Aorta (tissue), 5 donors: ENCODE measurements at regions of chr3 and their contacts with region 1.

Region 1: DNA sequence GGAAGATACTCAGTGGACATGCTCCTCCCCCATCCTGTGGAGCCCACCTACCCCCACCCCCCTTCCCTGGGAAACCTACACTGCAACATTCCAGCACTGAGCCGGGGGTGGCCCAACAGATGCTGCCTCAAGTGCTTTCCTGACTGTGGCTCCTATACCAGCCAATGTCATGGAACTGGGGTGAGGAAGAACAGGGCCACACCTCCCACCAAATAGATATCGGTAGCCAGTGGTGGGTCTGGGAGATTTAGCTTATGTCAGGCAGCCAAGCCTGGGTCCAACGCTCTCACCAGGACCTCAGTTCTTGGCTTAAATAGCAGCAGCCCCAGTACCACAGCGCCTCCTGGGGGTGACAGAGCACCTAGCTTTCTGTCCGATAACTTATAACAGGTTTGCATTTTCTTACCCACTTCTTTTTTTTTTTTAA is 30.3 kb downstream of the CDC25A start:
- DNase-seq: peak; percentile 71 to 87
- ATAC-seq: peak; percentile 69
- H3K4me3 ChIP-seq: no peak overlapping the region
- H3K27ac ChIP-seq: no peak overlapping the region
- H3K4me1 ChIP-seq: peaks cover 0 to 2% of the 10 kb centered on the region in 2 donors
- H3K27me3 ChIP-seq: no peaks in the 10 kb centered on the region

Region 2: GRCh38 chr3:47824541-47825473 is 333.2 kb before region 1 on chr3:
- intact Hi-C with region 1: loop called (anchors 5 kb)
- DNase-seq: peak; percentile 84 to 92
- ATAC-seq: peak; percentile 97
- H3K4me3 ChIP-seq: peak overlapping the region; percentile 41 to 84
- H3K27ac ChIP-seq: no peak overlapping the region
- H3K4me1 ChIP-seq: no peaks in the 10 kb centered on the region
- H3K27me3 ChIP-seq: no peaks in the 10 kb centered on the region

Region 3: DNA sequence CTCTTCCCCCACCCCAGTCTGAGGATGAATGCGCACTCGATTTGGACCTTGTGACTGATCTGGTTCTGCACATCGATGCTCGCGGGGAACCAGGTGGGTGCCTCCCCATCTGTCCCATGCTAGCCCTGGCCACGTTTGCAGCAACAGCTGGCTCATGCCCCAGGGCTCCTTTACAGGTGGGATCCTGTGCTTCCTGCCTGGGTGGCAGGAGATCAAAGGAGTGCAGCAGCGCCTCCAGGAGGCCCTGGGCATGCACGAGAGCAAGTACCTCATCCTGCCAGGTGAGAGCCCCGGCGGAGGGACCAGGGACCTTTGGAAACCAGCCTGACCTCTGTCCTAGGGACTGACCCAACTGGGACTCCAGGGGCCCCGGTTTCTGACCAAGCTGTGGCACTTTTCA is 310.7 kb before region 1 on chr3:
- intact Hi-C with region 1: no loop called
- DNase-seq: no peak
- ATAC-seq: no peak
- H3K4me3 ChIP-seq: no peak overlapping the region
- H3K27ac ChIP-seq: no peak overlapping the region
- H3K4me1 ChIP-seq: no peaks in the 10 kb centered on the region
- H3K27me3 ChIP-seq: no peaks in the 10 kb centered on the region

Region 4: DNA sequence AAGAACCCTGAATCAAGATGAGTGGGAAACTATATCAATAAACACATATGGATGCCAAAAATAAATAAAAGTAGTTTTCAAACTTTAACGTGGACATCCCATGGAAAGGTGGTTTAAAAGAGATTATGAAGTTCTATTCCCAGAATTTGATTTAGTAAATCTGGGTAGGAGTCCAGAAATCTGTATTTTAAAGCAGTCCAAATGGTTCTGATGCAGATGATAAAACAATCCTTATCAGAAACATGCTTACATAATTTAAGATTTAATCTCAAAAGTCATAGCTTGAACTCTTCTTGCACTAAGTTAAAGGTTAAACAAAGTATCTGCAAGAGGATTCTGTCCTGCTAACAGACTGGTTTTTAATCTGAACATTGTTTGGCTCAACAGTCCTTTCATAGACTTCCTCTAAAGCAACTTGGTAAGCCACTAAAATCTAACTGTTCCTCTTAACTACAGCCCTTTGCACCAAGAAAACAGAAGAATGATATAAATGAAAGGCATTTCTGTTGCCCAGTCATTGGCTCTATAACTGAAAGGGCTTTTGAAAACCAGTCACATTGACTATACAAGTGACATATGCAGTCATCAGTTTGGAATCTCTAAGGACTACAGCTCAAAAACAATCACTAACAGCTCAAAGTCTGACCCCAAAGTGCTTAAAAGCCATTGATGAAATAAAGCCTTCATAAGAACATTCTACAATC is 118.3 kb before region 1 on chr3:
- intact Hi-C with region 1: no loop called
- DNase-seq: no peak
- ATAC-seq: peak; percentile 66
- H3K4me3 ChIP-seq: no peak overlapping the region
- H3K27ac ChIP-seq: peak overlapping the region; percentile 97
- H3K4me1 ChIP-seq: peaks cover 2 to 5% of the 10 kb centered on the region in 2 donors
- H3K27me3 ChIP-seq: no peaks in the 10 kb centered on the region